Activated T-helper 1 cell treated with anti-CD3 and anti-CD28 coated beads, Interleukin-12 subunit alpha, Interleukin-12 subunit beta, Interleukin-2, Interleukin-4 antibody, amounts not matched to agents 30 ng/mL and 10 ng/mL and 1 ng/mL, durations not matched to agents 14 hours and 24 hours and 36 hours (primary cell): ENCODE measurements at regions of chr7 and their contacts with region 1.

Region 1: DNA sequence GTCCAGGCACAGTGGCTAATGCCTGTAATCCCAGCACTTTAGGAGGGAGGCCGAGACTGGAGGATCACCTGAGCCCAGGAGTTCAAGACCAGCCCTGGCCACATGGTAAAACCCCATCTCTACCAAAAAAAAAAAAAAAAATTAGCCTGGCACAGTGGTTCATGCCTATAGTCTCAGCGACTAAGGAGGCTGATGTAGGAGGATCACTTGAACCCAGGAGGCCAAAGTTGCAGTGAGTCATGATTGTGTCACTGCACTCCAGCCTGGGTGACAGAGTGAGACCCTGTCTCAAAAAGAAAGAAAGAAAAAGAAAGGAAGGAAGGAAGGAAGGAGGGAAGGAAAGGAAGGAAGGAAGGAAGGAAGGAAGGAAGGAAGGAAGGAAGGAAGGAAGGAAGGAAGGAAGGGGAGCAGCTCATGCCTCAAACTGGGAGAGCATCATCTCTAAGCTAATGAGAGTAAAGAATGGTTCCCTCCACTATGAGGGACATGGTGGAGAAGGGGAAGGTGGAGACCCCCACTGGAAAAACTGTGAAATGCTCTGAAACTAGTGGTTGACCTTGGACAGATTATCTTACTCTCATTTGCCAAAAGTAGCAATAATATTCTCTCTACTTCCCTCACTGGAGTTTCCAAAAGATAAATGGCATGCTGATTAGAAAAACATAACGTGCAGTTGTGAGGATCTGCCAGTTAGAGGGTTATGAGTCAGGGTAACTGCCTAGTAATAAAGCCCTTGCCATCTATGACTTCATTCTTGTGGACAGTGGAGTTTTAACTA is 16.8 kb downstream of the GIMAP5 start:
- DNase-seq: no peak
- H3K4me3 Mint-ChIP-seq: peak overlapping the region; percentile 70
- H3K27ac Mint-ChIP-seq: peak overlapping the region; percentile 98
- H3K4me1 Mint-ChIP-seq: peaks cover 68% of the 10 kb centered on the region
- H3K27me3 Mint-ChIP-seq: peaks cover 3% of the 10 kb centered on the region

Region 2: DNA sequence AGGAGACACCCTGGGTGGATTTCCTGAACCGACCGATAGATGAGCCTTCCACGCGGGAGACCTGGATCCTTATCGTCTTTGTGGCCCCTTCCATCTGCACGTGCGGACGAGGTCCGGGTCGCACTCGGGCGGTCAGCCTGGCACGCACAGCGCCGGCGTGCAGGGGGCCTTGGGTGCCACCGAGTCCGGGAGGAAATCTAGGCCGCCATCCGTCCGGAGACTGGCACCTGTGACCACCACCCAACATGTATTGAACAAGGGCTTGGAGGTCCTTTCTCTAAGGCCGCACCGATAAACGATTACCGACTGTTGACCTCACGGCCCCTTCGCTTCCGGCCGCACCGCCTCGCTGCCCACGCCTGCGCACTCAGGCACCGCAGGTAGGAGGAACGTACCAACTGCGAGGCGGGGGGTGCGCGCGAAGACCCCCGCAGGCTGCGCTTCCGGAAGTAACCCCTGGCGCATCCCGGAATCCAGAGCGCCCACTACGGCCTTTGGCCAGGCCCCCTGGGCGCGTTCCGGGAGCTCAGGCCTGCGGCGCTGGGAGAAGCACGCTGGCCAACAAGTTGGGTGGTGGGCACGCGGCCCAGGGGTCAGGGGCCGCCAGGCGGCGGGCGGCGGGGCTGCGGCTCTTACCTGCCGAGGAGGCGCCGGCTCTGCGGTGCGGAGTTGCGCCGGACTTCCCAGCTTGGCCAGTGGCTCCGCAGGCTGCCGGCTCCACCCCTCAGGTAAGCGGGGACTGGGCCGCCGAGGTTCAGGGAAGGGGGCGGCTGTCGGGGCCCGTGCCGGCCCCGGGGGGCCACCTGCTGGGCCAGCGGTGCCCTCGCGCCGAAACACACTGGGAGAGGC is 431.0 kb before region 1 on chr7 and contains the starts of genes ACTR3C and LRRC61:
- intact Hi-C with region 1: loop called (anchors 2 kb)
- DNase-seq: peak; percentile 64
- H3K4me3 Mint-ChIP-seq: peak within 1 kb of the TSS; percentile 97
- H3K27ac Mint-ChIP-seq: peak within 1 kb of the TSS; percentile 99
- H3K4me1 Mint-ChIP-seq: peaks cover 62% of the 10 kb centered on the region
- H3K27me3 Mint-ChIP-seq: no peaks in the 10 kb centered on the region
- total RNA-seq, gene ACTR3C: 8.2 and 9.8 TPM in 2 replicates
- total RNA-seq, gene LRRC61: 24.9 and 26.1 TPM in 2 replicates

Region 3: GRCh38 chr7:150420987-150421674 is 332.9 kb before region 1 on chr7:
- intact Hi-C with region 1: loop called (anchors 1 kb)
- DNase-seq: peak; percentile 80
- H3K4me3 Mint-ChIP-seq: no peak overlapping the region
- H3K27ac Mint-ChIP-seq: no peak overlapping the region
- H3K4me1 Mint-ChIP-seq: peaks cover 12% of the 10 kb centered on the region
- H3K27me3 Mint-ChIP-seq: peaks cover 5% of the 10 kb centered on the region

Region 4: GRCh38 chr7:150502519-150502918 is 251.5 kb before region 1 on chr7:
- intact Hi-C with region 1: loop called (anchors 1 kb)
- DNase-seq: no peak
- H3K4me3 Mint-ChIP-seq: peak overlapping the region; percentile 60
- H3K27ac Mint-ChIP-seq: peak overlapping the region; percentile 96
- H3K4me1 Mint-ChIP-seq: peaks cover 85% of the 10 kb centered on the region
- H3K27me3 Mint-ChIP-seq: no peaks in the 10 kb centered on the region

Region 5: GRCh38 chr7:150567169-150567568 is 186.8 kb before region 1 on chr7 and contains the start of gene GIMAP4:
- intact Hi-C with region 1: loop called (anchors 1 kb)
- DNase-seq: no peak
- H3K4me3 Mint-ChIP-seq: peak within 1 kb of the TSS; percentile 96
- H3K27ac Mint-ChIP-seq: peak within 1 kb of the TSS; percentile 99
- H3K4me1 Mint-ChIP-seq: peaks cover 93% of the 10 kb centered on the region
- H3K27me3 Mint-ChIP-seq: no peaks in the 10 kb centered on the region
- total RNA-seq, gene GIMAP4: 84.2 and 87.4 TPM in 2 replicates

Region 6: DNA sequence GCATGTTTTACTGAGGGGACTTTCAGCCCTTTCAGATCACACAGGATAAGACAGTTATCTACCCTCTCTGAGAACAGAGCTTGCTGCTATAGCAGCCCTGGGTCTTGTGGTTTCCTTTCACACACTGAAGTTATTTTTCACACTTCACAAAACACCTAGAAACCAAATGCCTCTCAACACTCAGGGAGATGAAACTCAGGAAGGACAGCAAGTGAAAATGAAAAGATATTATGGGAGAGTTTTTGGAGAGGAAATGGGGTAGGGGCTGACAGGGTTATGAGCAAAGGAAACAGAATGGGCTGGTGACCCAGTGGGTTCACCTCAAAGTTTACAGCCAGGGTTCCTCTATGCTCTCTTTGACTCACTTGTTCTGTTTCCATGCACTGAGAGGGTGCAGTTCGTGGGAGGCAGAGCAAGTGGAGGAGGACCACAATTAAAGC is 85.5 kb before region 1 on chr7:
- intact Hi-C with region 1: loop called (anchors 1 kb)
- DNase-seq: peak; percentile 74
- H3K4me3 Mint-ChIP-seq: peak overlapping the region; percentile 74
- H3K27ac Mint-ChIP-seq: peak overlapping the region; percentile 91
- H3K4me1 Mint-ChIP-seq: peaks cover 94% of the 10 kb centered on the region
- H3K27me3 Mint-ChIP-seq: no peaks in the 10 kb centered on the region

Region 7: GRCh38 chr7:150716368-150716767 is 37.6 kb before region 1 on chr7 and contains the start of gene GIMAP1:
- intact Hi-C with region 1: loop called (anchors 1 kb)
- DNase-seq: peak; percentile 58
- H3K4me3 Mint-ChIP-seq: peak within 1 kb of the TSS; percentile 97
- H3K27ac Mint-ChIP-seq: peak within 1 kb of the TSS; percentile 75
- H3K4me1 Mint-ChIP-seq: peaks cover 64% of the 10 kb centered on the region
- H3K27me3 Mint-ChIP-seq: no peaks in the 10 kb centered on the region
- total RNA-seq, gene GIMAP1: 4.6 and 4.9 TPM in 2 replicates

Region 8: DNA sequence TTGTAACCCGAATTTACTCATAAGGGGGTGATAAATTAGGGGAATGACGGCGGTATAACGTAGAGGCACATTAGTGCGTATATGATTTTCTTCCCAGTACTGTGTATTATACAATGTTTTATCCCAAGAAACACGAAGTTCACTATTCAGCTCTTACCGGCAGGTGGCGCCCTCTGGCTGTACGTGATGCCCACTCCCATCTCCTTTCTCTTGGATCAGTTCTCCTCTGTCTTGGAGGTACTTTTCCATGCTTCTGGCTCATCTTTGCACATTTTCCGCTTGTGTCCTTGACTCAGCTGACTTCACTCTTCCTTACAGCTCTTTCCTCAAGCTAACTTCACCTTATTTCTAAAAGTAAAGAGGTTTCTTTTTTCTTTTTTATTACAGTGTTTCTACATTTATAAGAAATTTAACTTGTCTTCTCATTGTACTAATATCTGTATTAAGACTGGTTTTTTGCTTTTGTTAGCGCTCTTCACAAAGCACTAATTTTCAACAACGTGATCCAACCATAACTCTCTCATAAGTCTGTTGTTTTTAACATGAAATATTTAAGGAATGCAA is 24.8 kb after region 1 on chr7:
- intact Hi-C with region 1: no loop called
- DNase-seq: peak; percentile 54
- H3K4me3 Mint-ChIP-seq: no peak overlapping the region
- H3K27ac Mint-ChIP-seq: no peak overlapping the region
- H3K4me1 Mint-ChIP-seq: peaks cover 9% of the 10 kb centered on the region
- H3K27me3 Mint-ChIP-seq: peaks cover 29% of the 10 kb centered on the region

Region 9: GRCh38 chr7:151917791-151918509 is 1163.9 kb after region 1 on chr7:
- intact Hi-C with region 1: no loop called
- DNase-seq: no peak
- H3K4me3 Mint-ChIP-seq: no peak overlapping the region
- H3K27ac Mint-ChIP-seq: no peak overlapping the region
- H3K4me1 Mint-ChIP-seq: no peaks in the 10 kb centered on the region
- H3K27me3 Mint-ChIP-seq: peaks cover 15% of the 10 kb centered on the region